ENCODE measurements at regions of chr4 and their contacts with region 1.

Region 1: GRCh38 chr4:69689599-69689998 is 36.6 kb upstream of the UGT2A1 start:
- H3K4me3 Mint-ChIP-seq: no peak overlapping the region
- H3K27ac Mint-ChIP-seq: no peak overlapping the region
- H3K4me1 Mint-ChIP-seq: no peaks in the 10 kb centered on the region
- H3K27me3 Mint-ChIP-seq: peaks cover 4% of the 10 kb centered on the region

Region 2: DNA sequence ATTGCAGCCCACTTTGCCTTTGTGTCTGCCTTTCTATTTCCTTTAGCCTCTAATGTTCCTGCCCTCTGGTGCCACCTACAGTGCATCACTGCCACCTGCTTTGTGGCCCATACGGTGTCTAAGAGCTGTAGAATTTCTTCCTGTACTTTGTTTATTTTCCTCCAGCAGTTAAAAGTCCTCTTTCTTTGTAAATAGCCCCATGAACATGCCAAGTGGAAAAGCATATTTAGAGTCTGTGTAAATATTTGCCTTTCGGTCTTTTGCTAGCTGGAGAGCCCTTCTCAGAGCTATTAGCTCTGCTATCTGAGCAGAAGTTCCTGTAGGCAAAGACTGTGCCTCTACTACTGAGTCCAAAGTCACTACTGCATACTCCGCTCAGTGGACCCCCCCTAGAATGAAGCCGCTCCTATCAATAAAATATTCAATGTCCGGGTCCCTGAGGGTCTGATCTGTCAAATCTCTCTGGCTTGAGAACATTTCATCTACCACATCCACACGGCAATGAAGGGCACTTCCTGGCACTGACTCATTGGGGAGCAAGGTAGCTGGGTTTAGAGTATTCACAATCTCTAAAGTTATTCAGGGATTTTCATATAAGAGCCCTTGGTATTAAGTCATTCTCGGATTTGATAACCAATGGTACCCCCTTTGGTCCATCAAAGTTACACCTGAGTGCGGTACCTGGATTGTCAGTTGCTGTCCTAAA is 134.0 kb after region 1 on chr4:
- intact Hi-C with region 1: loop called (anchors 2 kb)
- H3K4me3 Mint-ChIP-seq: no peak overlapping the region
- H3K27ac Mint-ChIP-seq: no peak overlapping the region
- H3K4me1 Mint-ChIP-seq: peaks cover 11% of the 10 kb centered on the region
- H3K27me3 Mint-ChIP-seq: no peaks in the 10 kb centered on the region

Region 3: DNA sequence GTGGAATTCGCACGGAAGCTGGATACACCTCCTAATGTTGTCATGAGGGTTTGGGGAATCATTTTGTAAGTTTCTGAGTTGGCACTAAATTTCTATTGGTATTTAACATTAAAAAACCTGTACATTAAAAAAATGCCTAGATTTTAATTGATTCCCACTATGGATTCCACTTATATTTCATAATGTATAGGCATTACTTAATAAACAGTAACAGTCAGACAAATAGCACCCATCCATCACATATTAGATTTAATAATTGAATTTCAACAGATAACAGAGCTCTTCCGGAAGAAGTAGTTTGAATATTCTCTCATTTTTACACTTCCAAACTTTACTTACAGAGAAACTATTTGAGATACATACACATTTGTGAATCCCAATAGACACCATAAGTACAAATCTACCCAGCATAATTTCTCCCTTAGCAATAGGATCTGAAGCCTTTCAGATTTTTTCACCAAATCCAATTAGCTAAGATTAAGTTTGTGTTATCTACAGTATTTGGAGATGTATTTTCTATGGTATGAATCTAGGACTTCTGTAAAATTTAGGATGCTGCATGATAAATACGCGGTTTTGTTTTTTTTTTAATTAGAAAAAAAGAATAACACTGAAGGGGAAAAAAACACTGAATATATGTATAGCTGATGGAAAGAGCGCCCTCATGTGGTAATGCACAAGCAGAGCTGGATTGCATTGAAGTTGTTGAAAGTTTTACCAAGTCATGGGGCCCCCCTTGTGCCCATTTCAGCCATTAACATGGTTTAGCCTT is 493.8 kb after region 1 on chr4:
- intact Hi-C with region 1: loop called (anchors 1 kb)
- H3K4me3 Mint-ChIP-seq: no peak overlapping the region
- H3K27ac Mint-ChIP-seq: no peak overlapping the region
- H3K4me1 Mint-ChIP-seq: no peaks in the 10 kb centered on the region
- H3K27me3 Mint-ChIP-seq: no peaks in the 10 kb centered on the region